ENCODE measurements at regions of chr5 and their contacts with region 1.

Region 1: DNA sequence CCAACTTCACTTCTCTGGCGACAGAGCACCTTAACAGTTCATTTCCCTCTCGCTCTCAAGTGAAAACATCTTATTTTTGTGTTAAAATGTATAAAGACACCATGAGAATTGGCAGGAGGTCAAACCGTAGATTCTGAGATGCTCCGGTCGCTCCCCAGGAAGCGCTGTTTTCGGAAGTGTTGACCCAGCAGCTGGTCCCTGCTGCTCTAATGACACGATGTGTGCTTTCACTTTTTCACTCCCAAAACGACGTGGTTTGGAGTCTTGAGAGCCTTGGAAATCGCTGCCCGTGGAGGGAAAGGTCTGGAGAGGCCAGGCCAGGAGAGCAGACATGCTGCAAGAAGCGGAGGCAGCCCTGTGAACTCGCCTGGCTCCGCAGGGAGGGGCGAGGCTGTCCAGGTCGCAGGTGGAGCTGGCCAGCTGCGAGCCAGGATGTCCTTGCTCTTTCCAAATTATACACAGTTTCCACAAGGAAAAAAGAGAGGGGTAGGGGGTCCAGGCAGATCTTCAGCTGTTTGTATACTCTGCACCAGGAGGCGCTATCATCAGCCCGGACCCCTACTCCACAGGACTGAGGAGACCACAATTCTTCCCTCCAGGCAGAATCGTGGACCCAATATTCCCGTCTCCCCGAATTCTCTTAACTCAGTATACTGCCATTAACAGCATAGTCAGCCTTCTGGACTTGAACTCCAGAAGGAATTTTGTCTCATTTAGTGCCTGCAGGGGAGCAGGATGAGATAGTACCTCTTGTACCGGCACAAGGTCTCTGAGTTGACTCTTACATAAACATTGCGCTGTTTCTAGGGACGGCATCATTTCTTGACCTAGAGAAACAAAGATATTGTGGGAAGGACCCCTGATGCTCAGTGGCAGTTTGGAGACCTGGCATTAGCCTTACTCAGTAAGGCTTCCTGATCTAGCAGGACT is 248.6 kb upstream of the ANKRD55 start:
- DNase-seq: no peak
- H3K4me3 ChIP-seq: peak overlapping the region; percentile 77 to 89
- H3K27ac ChIP-seq: peak overlapping the region; percentile 90 to 97
- H3K4me1 ChIP-seq: peaks cover 5 to 21% of the 10 kb centered on the region in 2 donors
- H3K27me3 ChIP-seq: no peaks in the 10 kb centered on the region
- CTCF ChIP-seq: peak in 2 of 3 experiments; percentile 13 to 23

Region 2: DNA sequence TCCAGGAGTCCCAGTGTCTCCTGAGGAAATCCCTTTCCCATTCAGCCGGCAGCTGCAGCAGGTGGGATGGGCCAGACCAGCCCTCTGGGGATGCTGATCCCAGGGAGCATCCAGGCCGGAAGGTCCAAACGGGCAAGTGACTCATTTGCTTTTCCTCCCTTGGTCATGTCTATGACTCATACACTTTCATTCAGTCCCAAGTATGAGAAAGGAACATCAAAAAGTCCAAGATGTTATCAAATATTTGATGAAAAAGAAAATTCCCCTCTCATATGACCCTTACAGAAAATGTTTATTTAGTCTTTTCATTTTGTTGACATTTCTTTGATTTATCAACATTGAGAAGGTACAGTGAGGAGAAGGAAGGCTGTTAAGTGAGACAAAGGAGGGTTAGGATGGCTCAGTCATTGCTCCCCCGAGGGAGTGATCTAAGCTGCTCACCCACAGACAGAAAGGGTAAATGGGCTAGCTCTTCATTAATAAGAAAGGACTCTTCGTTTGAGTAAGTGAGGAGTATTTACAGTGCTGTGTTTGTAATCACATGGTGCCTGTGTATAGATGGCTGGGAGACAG is 131.0 kb before region 1 on chr5:
- intact Hi-C with region 1: loop called (anchors 10 kb)
- DNase-seq: peak in 1 of 2 donors; percentile 83
- H3K4me3 ChIP-seq: no peak overlapping the region
- H3K27ac ChIP-seq: no peak overlapping the region
- H3K4me1 ChIP-seq: peaks cover 4 to 13% of the 10 kb centered on the region in 2 donors
- H3K27me3 ChIP-seq: no peaks in the 10 kb centered on the region
- CTCF ChIP-seq: no peak

Region 3: GRCh38 chr5:56457887-56458812 is 23.5 kb before region 1 on chr5:
- intact Hi-C with region 1: loop called (anchors 2 kb)
- DNase-seq: no peak
- H3K4me3 ChIP-seq: peak overlapping the region in 1 of 2 donors; percentile 41
- H3K27ac ChIP-seq: peak overlapping the region; percentile 82 to 94
- H3K4me1 ChIP-seq: peaks cover 13 to 24% of the 10 kb centered on the region in 2 donors
- H3K27me3 ChIP-seq: no peaks in the 10 kb centered on the region
- CTCF ChIP-seq: no peak